B cell (primary cell): ENCODE measurements at regions of chr14 and their contacts with region 1.

Region 1: DNA sequence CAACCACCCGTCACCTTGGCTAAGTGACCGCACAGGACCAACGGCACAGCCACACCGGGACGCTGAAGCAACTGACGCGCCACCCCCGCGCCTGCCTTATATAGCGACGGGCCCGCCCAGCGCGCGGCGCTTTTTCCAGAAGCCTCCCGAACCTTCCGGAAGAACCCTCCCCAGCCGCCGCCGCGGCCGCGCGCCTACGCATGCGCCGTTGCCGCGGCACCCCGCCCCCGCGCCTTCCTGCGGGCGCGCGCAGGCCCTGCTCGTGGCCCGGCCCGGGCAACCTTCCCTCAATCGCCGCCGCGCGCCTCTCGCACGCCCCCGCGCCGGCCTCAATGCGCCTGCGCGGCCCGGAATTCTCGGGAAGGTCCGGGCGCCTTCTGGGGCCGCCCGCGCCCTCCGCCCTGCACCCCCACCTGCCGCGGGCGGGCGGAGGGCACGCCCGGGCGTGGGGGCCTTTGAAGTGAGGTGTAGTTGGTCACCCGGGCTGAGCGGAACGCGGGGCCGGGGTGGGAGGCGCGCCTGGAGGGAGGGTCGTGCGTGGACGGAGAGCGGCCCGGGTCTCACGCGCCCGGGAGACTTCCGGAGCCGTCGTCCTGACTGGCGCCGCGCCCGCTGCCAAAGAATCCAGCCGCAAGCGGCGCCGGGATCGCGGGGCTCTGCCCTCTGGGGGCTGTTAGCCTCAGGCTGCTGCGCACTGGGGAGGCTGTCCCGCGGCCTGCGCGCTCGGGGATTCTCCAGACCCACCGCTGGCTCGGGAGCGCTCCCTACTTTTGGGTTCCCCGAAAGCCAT is at the start of gene HSP90AA1:
- DNase-seq: peak; percentile 97
- ATAC-seq: peak; percentile 70
- H3K4me3 ChIP-seq: peak within 1 kb of the TSS; percentile 79 to 91 (median 84)
- H3K4me3 Mint-ChIP-seq: peak within 1 kb of the TSS; percentile 95
- H3K27ac ChIP-seq: peak within 1 kb of the TSS; percentile 96 to 98
- H3K27ac Mint-ChIP-seq: peak within 1 kb of the TSS; percentile 96
- H3K4me1 ChIP-seq: peaks cover 18 to 28% of the 10 kb centered on the region in 2 donors
- H3K4me1 Mint-ChIP-seq: peaks cover 55% of the 10 kb centered on the region
- H3K27me3 ChIP-seq: no peaks in the 10 kb centered on the region
- H3K27me3 Mint-ChIP-seq: no peaks in the 10 kb centered on the region
- CTCF ChIP-seq: no peak
- total RNA-seq, gene HSP90AA1: 222 and 225 TPM in 2 replicates

Region 2: DNA sequence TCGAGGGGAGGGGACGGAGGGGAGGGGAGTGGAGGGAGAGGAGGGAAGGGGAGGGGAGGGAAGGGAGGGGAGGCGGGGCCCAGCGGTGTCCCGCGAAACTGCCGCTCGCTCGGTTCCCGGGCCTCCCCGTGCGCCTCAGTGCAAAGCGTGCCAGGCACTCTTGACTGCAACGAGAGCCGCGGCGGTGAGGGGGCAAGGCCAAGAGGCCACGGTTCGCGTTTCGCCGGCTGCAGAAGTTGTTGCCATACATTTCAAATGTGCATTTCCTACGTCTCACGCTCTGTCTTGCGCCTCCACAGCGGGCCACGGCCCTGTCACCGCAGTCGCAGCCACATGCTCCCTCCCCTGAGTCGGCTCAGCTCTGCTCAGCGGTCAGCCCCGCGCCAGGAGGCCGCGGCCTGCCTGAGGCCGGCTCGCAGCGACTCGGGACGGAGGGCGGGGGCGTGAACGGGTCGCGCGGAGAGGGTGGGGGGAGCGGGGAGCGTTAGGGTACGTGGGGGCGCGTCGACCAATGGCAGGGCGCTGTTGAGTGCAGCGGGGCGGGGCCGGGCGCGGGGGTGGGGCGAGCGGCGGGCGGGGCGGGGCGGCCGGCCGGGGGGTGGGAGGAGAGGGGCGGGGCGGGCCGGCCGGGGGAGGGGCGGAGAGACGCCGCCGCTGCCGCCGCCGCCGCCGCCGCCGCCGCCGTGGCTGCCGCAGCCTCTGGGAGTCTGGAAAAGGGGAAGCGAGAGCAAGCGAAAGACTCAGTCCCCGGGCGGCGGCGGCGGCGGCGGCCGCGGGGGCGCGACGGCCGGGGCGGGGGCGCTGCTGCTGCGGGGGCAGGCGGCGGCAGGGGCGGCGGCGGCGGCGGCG is 325.9 kb before region 1 on chr14 and contains the start of gene PPP2R5C:
- CTCF ChIA-PET with region 1: no interaction called
- POLR2A ChIA-PET with region 1: no interaction called
- intact Hi-C with region 1: loop called (anchors 1 kb)
- DNase-seq: peak; percentile 93
- ATAC-seq: peak; percentile 63
- H3K4me3 ChIP-seq: peak within 1 kb of the TSS; percentile 73 to 96 (median 87)
- H3K4me3 Mint-ChIP-seq: peak within 1 kb of the TSS; percentile 94
- H3K27ac ChIP-seq: peak within 1 kb of the TSS; percentile 66 to 78
- H3K27ac Mint-ChIP-seq: peak within 1 kb of the TSS; percentile 92
- H3K4me1 ChIP-seq: peaks cover 11 to 12% of the 10 kb centered on the region in 2 donors
- H3K4me1 Mint-ChIP-seq: peaks cover 14% of the 10 kb centered on the region
- H3K27me3 ChIP-seq: no peaks in the 10 kb centered on the region
- H3K27me3 Mint-ChIP-seq: no peaks in the 10 kb centered on the region
- CTCF ChIP-seq: no peak
- total RNA-seq, gene PPP2R5C: 330 and 337 TPM in 2 replicates

Region 3: DNA sequence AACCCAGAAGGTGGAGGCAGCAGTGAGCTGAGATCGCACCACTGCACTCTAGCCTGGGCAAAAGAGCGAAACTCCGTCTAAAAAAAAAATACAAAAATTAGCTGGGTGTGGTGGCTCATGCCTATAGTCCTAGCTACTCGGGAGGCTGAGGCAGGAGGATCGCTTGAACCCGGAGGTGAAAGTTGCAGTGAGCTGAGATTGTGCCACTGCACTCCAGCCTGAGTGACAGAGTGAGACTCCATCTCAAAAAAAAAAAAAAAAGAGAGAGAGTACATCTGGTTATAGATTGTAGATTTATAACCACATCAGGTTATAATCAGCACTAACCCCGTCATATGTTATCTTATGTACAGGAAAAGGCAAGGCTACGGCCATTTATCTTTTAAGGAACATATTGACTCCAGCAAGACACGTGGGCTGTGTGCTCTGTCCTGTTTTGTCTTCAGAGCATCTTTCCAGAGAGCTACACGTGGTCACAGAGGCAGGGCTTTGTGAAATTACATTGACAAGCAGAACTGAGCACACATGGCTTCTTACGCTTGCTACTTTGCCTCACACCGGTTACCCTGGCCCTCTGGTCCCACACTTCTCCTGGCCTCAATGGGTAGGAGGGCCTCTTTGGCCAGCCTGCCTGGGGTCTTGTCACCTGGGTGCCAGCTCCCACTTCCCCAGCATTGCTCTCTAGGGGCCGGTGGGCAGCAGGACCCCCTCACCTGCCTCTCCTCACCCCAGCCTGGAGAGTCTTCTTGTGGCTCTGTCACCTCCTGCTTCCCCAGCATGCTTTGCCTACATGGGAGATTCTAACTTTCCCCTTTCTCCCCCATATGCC is 129.5 kb before region 1 on chr14:
- CTCF ChIA-PET with region 1: no interaction called
- POLR2A ChIA-PET with region 1: no interaction called
- intact Hi-C with region 1: no loop called
- DNase-seq: no peak
- ATAC-seq: no peak
- H3K4me3 ChIP-seq: no peak overlapping the region
- H3K4me3 Mint-ChIP-seq: no peak overlapping the region
- H3K27ac ChIP-seq: no peak overlapping the region
- H3K27ac Mint-ChIP-seq: no peak overlapping the region
- H3K4me1 ChIP-seq: peaks cover 0 to 4% of the 10 kb centered on the region in 2 donors
- H3K4me1 Mint-ChIP-seq: peaks cover 8% of the 10 kb centered on the region
- H3K27me3 ChIP-seq: no peaks in the 10 kb centered on the region
- H3K27me3 Mint-ChIP-seq: no peaks in the 10 kb centered on the region
- CTCF ChIP-seq: no peak

Region 4: GRCh38 chr14:102063091-102063802 is 23.9 kb before region 1 on chr14:
- CTCF ChIA-PET with region 1: interaction called, 3 read pairs
- POLR2A ChIA-PET with region 1: no interaction called
- intact Hi-C with region 1: loop called (anchors 1 kb)
- DNase-seq: peak; percentile 76
- ATAC-seq: peak; percentile 98
- H3K4me3 ChIP-seq: no peak overlapping the region
- H3K4me3 Mint-ChIP-seq: no peak overlapping the region
- H3K27ac ChIP-seq: no peak overlapping the region
- H3K27ac Mint-ChIP-seq: no peak overlapping the region
- H3K4me1 ChIP-seq: peaks cover 0 to 3% of the 10 kb centered on the region in 2 donors
- H3K4me1 Mint-ChIP-seq: peaks cover 4% of the 10 kb centered on the region
- H3K27me3 ChIP-seq: peaks cover 0 to 2% (median 0%) of the 10 kb centered on the region in 4 experiments
- H3K27me3 Mint-ChIP-seq: no peaks in the 10 kb centered on the region
- CTCF ChIP-seq: peak; percentile 49

Region 5: DNA sequence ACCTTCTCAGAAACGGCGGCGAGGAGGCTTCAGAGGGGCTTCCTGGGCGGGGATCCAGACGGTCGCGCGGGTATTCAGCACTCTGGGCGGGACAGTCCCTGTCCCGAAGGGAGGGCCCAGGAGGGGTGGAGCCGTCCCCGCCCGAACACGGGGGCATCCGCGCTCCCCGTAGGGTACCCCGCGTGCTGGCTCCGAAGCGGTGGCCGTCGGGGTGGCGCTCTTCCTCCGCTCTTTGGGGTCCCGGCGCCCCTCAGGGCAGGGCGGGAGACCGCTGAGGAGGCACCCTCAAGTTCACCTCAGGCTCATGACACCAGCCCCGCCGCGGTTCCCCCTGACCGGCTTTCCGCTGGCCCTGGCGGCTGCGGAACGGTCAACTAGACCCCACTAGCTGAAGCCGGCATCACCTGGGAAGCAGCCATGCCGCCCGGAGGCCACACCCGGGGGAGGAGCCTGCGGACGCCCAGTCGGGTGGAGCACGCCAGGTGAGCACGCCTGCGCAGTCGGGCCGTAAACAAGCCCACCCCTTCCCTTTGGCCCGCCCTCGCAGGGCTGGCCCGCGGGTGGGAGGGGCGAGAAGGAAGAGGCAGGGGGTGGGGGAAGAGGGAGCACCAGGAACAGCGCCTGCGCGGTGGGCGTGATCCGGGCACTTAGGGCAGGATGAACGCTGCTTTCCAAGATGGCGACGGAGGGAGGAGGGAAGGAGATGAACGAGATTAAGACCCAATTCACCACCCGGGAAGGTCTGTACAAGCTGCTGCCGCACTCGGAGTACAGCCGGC is 52.3 kb after region 1 on chr14 and contains the start of gene WDR20:
- CTCF ChIA-PET with region 1: interaction called, 3 read pairs
- POLR2A ChIA-PET with region 1: interaction called, 3 read pairs
- intact Hi-C with region 1: loop called (anchors 1 kb)
- DNase-seq: peak; percentile 98
- ATAC-seq: peak; percentile 93
- H3K4me3 ChIP-seq: peak within 1 kb of the TSS; percentile 66 to 94 (median 88)
- H3K4me3 Mint-ChIP-seq: peak within 1 kb of the TSS; percentile 89
- H3K27ac ChIP-seq: peak within 1 kb of the TSS; percentile 88 to 90
- H3K27ac Mint-ChIP-seq: peak within 1 kb of the TSS; percentile 94
- H3K4me1 ChIP-seq: peaks cover 14 to 16% of the 10 kb centered on the region in 2 donors
- H3K4me1 Mint-ChIP-seq: peaks cover 24% of the 10 kb centered on the region
- H3K27me3 ChIP-seq: no peaks in the 10 kb centered on the region
- H3K27me3 Mint-ChIP-seq: no peaks in the 10 kb centered on the region
- CTCF ChIP-seq: no peak
- total RNA-seq, gene WDR20: 62.8 and 64.0 TPM in 2 replicates

Region 6: GRCh38 chr14:102154821-102155549 is 67.8 kb after region 1 on chr14:
- CTCF ChIA-PET with region 1: no interaction called
- POLR2A ChIA-PET with region 1: no interaction called
- intact Hi-C with region 1: no loop called
- DNase-seq: no peak
- ATAC-seq: no peak
- H3K4me3 ChIP-seq: no peak overlapping the region
- H3K4me3 Mint-ChIP-seq: no peak overlapping the region
- H3K27ac ChIP-seq: no peak overlapping the region
- H3K27ac Mint-ChIP-seq: no peak overlapping the region
- H3K4me1 ChIP-seq: peaks cover 6 to 7% of the 10 kb centered on the region in 2 donors
- H3K4me1 Mint-ChIP-seq: peaks cover 40% of the 10 kb centered on the region
- H3K27me3 ChIP-seq: no peaks in the 10 kb centered on the region
- H3K27me3 Mint-ChIP-seq: no peaks in the 10 kb centered on the region
- CTCF ChIP-seq: no peak